Mammary epithelial cell (primary cell): ENCODE measurements at regions of chr7 and their contacts with region 1.

Region 1: DNA sequence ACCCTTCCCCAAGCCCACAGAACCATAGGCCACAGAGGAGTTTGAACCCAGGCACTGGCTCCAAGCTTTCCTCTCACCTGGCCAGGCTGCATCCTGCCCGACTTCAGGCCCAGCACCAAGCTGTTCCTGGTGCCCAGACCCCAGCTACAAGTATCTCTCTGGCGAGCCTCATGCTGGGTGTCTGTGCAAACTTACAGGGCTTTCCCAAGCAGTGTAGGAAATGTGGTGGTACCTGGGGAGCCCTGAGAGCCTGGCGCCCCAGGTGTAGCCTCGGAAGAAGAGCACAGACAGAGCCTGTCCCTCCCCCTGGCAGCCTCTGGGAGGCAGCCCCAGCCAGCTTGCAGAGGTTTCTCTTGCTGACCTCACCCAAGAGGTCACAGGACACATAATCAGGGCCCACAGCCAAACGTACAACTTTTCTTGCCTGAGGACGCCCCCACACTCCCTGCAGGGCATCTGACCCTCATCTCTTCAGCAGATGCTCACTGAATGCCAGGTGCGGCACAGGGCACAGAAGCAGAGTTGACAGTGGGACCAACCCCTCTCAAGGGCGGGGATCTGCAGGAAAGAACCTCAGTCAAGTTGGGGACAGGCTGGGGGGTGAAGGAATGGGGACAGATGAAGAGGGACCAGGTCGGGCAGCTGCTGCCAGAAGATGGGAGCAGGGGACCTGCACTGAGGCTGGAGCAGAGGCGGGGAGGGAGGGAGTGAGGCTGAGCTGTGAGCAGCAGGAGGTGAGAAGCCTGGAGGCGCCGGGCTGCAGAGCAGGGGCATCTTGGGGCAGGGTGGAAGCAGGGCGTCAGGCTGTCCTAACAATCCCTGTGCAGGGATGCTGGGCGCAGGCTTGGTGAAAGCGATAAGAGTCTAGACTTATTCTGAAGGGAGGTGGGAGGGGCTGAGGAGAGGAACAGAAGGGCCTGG is 16.3 kb upstream of the MYL7 start:
- DNase-seq: no peak
- H3K4me3 ChIP-seq: no peak overlapping the region
- H3K27ac ChIP-seq: no peak overlapping the region
- H3K4me1 ChIP-seq: peaks cover 2% of the 10 kb centered on the region
- H3K27me3 ChIP-seq: no peaks in the 10 kb centered on the region
- CTCF ChIP-seq: no peak

Region 2: DNA sequence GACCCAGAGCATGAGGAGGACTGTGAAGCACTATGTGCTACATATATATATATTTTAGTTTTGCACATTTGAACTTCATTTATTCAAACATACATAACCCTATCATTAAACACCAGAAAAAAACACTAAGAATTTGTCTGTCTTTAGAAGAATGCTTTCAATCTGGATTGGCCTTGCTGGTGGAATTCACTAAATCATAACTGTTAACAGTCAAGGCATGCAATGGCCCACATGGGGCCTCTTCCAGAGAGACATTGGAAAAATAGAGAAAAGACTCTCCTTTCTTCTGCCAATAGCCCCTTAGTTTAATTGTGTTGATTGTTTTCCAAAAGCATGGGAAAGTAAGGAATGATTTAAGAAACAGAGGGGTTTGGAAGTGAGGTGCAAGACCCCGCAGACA is 1147.3 kb before region 1 on chr7:
- CTCF ChIA-PET with region 1: no interaction called
- dilution Hi-C with region 1: no loop called
- in situ Hi-C with region 1: no loop called
- intact Hi-C with region 1: no loop called
- DNase-seq: no peak
- H3K4me3 ChIP-seq: no peak overlapping the region
- H3K27ac ChIP-seq: no peak overlapping the region
- H3K4me1 ChIP-seq: no peaks in the 10 kb centered on the region
- H3K27me3 ChIP-seq: no peaks in the 10 kb centered on the region
- CTCF ChIP-seq: no peak

Region 3: DNA sequence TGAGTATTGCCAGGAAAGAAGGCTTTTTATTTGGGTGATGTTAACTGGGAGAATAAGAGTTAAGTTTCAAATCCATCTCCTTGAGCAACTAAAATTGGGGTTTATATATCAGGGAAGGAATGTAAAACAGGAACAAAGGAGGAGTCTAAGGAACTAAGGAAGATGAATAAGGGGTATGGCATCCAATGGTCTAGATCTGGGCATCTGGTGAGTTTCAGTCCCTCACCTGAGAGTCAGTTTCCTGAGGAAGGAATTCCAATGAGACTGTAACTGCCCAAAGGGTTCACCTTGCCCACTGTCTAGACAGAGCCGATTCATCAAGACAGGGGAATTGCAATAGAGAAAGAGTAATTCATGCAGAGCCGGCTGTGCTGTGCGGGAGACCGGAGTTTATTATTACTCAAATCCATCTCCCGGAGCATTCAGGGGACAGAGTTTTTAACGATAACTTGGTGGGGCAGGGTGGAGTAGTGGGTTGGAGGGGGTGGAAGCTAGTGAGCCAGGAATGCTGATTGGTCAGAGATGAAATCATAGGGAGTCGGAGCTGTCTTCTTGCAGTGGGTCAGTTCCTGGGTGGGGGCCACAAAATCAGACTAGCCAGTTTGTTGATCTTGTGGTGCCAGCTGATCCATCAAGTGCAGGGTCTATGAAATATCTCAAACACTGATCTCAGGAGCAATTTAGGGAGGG is 762.8 kb before region 1 on chr7:
- CTCF ChIA-PET with region 1: no interaction called
- dilution Hi-C with region 1: no loop called
- in situ Hi-C with region 1: no loop called
- intact Hi-C with region 1: no loop called
- DNase-seq: peak; percentile 93
- H3K4me3 ChIP-seq: no peak overlapping the region
- H3K27ac ChIP-seq: peak overlapping the region; percentile 84
- H3K4me1 ChIP-seq: peaks cover 36% of the 10 kb centered on the region
- H3K27me3 ChIP-seq: no peaks in the 10 kb centered on the region
- CTCF ChIP-seq: no peak

Region 4: DNA sequence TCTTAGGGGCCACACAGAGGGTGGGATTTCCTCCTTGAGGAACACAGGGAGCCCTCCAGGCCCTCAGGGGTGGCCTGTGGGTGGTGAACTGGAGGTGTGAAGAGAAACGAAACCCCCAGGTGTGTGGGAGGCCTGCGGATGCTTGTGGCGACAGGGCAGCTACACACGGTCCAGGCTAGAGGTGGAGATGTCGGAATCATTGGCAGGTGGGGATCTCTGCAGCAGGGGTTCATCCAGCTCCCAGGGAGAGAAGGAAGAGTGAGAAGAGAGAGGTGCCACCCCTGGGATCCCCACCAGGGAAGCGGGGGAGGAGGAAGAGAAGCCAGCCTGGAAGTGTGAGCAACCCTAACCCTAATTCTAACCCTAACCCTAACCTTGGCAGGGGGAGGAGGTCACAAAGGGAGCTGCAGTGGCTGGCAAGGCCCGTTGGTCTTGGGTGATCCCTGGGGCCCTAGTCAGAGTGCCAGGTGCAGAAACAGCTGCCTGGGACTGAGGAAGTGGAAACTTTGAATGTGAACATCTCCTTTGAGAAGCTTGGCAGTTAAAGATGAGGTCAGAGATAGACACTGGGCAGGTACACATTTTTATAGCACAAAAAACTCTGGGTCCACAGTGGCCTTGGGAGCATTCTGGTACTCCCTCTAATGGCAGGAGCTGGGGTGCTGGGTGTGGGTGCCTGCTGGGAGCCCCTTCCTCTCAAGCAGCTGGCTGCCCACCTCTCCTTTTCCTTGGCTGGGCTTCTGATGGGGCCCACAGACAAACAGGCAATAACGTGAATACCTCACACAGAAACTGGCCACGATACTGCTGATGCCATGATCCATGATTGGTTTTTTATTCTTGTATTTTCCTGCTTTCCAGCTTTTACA is 60.1 kb before region 1 on chr7:
- CTCF ChIA-PET with region 1: no interaction called
- dilution Hi-C with region 1: loop called (anchors 5 kb)
- in situ Hi-C with region 1: no loop called
- intact Hi-C with region 1: no loop called
- DNase-seq: no peak
- H3K4me3 ChIP-seq: no peak overlapping the region
- H3K27ac ChIP-seq: no peak overlapping the region
- H3K4me1 ChIP-seq: peaks cover 4% of the 10 kb centered on the region
- H3K27me3 ChIP-seq: no peaks in the 10 kb centered on the region
- CTCF ChIP-seq: no peak

Region 5: DNA sequence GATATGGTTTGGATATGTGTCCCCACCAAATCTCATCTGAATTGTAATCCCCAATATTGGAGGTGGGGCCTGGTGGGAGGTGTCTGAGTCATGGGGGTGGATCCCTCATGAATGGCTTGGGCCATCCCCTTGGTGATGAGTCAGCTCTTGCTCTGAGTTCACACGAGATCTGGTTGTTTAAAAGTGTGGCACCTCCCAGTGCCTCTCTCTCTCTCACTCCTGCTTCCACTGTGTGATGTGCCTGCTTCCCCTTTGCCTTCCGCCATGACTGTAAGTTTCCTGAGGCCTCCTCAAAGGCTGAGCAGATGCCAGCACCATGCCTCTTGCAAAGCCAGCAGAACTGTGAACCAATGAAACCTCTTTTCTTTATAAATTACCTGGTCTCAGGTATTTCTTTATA is 36.7 kb after region 1 on chr7:
- CTCF ChIA-PET with region 1: no interaction called
- dilution Hi-C with region 1: loop called (anchors 5 kb)
- in situ Hi-C with region 1: no loop called
- intact Hi-C with region 1: no loop called
- DNase-seq: peak; percentile 44
- H3K4me3 ChIP-seq: no peak overlapping the region
- H3K27ac ChIP-seq: no peak overlapping the region
- H3K4me1 ChIP-seq: peaks cover 3% of the 10 kb centered on the region
- H3K27me3 ChIP-seq: no peaks in the 10 kb centered on the region
- CTCF ChIP-seq: no peak

Region 6: GRCh38 chr7:44547536-44548231 is 390.3 kb after region 1 on chr7:
- CTCF ChIA-PET with region 1: no interaction called
- dilution Hi-C with region 1: no loop called
- in situ Hi-C with region 1: no loop called
- intact Hi-C with region 1: no loop called
- DNase-seq: no peak
- H3K4me3 ChIP-seq: no peak overlapping the region
- H3K27ac ChIP-seq: no peak overlapping the region
- H3K4me1 ChIP-seq: peaks cover 19% of the 10 kb centered on the region
- H3K27me3 ChIP-seq: no peaks in the 10 kb centered on the region
- CTCF ChIP-seq: no peak